Mucosa of descending colon (tissue), 3 donors: ENCODE measurements at regions of chr4 and their contacts with region 1.

Region 1: GRCh38 chr4:138090150-138090917 is 151.8 kb downstream of the SLC7A11 start:
- DNase-seq: peak in 1 of 3 donors; percentile 71
- ATAC-seq: peak; percentile 84
- H3K4me3 ChIP-seq: no peak overlapping the region
- H3K4me1 ChIP-seq: no peaks in the 10 kb centered on the region
- CTCF ChIP-seq: peak; percentile 64

Region 2: DNA sequence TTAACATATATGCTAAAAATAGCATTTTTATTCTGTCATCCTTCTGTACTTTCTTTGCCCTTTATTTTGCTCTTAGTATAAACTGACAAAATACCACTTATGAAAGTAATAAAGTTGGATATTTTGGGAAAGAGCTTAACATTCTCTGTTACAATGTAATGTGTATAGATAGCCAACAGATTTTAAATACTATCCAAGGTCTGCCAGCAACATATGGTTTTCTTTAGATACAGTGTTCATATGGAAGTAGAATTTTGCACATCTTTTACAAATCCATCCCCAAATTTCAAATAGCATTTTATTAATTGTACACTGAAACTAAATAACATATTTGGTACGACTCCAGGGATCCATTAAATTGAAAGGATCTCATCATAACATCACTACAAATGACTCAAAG is 289.5 kb before region 1 on chr4:
- intact Hi-C with region 1: no loop called
- DNase-seq: no peak
- ATAC-seq: no peak
- H3K4me3 ChIP-seq: no peak overlapping the region
- H3K4me1 ChIP-seq: no peaks in the 10 kb centered on the region
- CTCF ChIP-seq: no peak

Region 3: DNA sequence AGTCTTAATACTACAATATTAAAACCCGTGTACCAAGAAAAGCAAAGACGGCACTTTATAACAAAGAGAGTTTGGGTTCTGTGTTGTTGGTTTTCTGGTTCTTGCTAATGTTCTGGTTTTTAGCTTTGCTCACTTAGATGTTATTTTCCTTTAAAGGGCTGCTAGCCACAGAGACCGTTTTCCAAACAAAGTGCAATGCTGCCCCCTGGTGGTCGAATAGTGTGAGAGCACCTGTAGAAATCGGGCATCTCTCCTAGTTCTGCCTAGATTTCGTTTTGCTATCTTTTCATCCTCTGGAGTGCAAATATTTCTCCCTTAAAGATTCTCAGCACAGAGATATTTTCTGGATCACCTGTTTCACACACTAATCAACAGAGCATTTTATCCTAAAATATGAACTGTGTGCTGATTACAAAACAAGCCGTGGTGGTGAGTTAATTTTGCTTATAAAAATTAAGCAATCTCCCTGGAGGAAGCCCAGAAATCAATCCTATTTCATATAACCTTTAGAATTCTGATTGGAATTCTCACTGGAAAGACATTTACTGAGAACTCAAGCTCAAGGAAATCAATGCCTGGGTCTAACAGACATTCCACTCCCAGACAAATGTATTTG is 590.8 kb after region 1 on chr4:
- intact Hi-C with region 1: loop called in 1 of 2 experiments (anchors 10 kb)
- DNase-seq: peak in 2 of 3 donors; percentile 69 to 85
- ATAC-seq: peak; percentile 82
- H3K4me3 ChIP-seq: no peak overlapping the region
- H3K4me1 ChIP-seq: no peaks in the 10 kb centered on the region
- CTCF ChIP-seq: peak; percentile 85